ENCODE measurements at regions of chr12 and their contacts with region 1.

Region 1: GRCh38 chr12:64551698-64552097 is 58.6 kb upstream of the RASSF3 start:
- DNase-seq: no peak
- H3K4me3 ChIP-seq: no peak overlapping the region
- H3K27ac ChIP-seq: no peak overlapping the region
- H3K4me1 ChIP-seq: no peaks in the 10 kb centered on the region
- H3K27me3 ChIP-seq: no peaks in the 10 kb centered on the region
- CTCF ChIP-seq: no peak
- EP300 ChIP-seq: no peak
- RAD21 ChIP-seq: no peak

Region 2: DNA sequence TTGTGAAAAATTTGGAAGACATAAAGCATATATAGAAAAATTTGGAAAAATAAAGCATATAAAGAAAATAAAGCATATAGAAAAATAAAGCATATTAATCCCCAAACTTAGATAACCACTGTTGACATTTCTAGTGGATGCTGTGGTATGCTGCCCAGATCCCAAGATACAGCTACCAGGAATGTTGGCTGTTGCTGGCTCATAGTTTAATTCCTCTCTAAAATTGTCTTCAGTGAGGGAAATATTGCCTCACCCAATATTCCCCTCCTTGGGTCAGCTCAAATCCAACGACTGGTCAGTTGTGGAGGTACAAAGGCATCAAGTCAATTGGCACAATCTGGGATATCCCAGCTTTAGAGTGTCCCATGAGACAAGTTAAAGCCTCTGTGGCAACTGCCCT is 319.5 kb before region 1 on chr12:
- CTCF ChIA-PET with region 1: no interaction called
- POLR2A ChIA-PET with region 1: no interaction called
- DNase-seq: no peak
- H3K4me3 ChIP-seq: no peak overlapping the region
- H3K27ac ChIP-seq: no peak overlapping the region
- H3K4me1 ChIP-seq: peaks cover 0 to 2% of the 10 kb centered on the region in 2 experiments; a peak in 1 of 4 replicates
- H3K27me3 ChIP-seq: no peaks in the 10 kb centered on the region
- CTCF ChIP-seq: no peak
- EP300 ChIP-seq: no peak
- RAD21 ChIP-seq: no peak

Region 3: GRCh38 chr12:64566732-64567399 is 15.2 kb after region 1 on chr12:
- CTCF ChIA-PET with region 1: interaction called, 37 read pairs
- POLR2A ChIA-PET with region 1: no interaction called
- DNase-seq: no peak
- H3K4me3 ChIP-seq: no peak overlapping the region
- H3K27ac ChIP-seq: no peak overlapping the region; a peak in 1 of 4 replicates
- H3K4me1 ChIP-seq: peaks cover 0 to 3% of the 10 kb centered on the region in 2 experiments; a peak in 1 of 4 replicates
- H3K27me3 ChIP-seq: no peaks in the 10 kb centered on the region
- CTCF ChIP-seq: no peak
- EP300 ChIP-seq: no peak
- RAD21 ChIP-seq: no peak

Region 4: DNA sequence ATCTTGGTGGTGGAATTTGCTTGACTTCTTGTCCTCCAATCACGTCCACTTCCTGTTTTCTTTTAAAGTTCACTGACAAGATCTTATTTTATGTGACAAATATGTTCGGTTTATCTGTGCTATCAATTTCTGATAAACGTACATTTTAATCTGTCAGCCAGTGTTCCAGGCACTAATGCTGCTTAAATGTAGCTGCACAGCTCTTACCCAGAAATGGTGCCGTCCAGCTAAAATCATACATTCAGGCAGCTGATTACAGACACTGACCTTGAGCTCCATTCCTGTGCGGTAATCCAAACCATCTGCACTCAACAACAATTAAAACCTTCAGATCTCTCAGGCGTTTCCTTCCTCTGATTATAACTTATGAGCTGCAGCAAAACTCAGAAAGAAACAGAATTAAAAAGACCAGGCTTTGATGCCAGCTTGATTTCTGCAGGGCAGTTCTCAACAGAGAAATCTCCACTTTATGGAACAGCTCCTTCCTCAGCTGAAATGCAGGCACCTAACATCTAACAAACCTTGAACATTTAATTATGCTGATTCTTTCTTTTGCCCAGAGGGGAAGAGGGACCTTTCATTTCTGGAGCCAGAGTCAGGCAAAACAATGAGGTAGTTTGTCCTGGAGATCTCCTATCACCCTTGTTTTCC is 32.2 kb after region 1 on chr12:
- CTCF ChIA-PET with region 1: interaction called, 11 read pairs
- POLR2A ChIA-PET with region 1: no interaction called
- DNase-seq: peak; percentile 59
- H3K4me3 ChIP-seq: no peak overlapping the region
- H3K27ac ChIP-seq: peak overlapping the region in 1 of 2 experiments; percentile 82; a peak in 2 of 4 replicates
- H3K4me1 ChIP-seq: peaks cover 11 to 13% of the 10 kb centered on the region in 2 experiments; a peak in 3 of 4 replicates
- H3K27me3 ChIP-seq: no peaks in the 10 kb centered on the region
- CTCF ChIP-seq: no peak
- EP300 ChIP-seq: peak in 1 of 2 experiments; percentile 75; a peak in 2 of 4 replicates
- RAD21 ChIP-seq: peak; percentile 11; the same call in 1 of the 2 replicates

Region 5: DNA sequence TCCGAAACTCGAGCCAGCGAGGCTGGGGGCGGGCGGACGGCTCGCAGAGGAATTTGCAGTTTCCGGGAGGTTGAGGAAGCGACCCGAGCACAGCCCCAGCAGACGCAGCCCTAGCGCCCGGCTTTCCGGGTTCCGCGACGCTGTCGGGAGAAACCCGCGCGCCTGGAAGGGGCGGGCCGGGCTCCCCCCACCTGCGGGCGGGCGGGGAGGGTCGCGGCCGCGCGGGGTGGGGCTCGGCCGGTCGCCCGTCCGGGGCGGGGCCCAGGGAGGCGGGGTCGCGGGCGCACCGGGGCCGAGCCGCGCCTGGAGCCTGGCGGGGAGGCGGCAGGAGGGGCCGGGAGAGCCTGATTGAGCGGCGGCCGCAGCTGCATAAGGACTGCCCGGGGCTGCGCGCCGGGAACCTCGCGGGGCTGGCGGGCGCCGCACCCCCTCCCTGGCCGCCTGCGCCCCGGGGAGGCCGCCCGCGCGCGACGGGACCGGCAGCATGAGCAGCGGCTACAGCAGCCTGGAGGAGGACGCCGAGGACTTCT is 58.5 kb after region 1 on chr12 and contains the start of gene RASSF3:
- CTCF ChIA-PET with region 1: interaction called, 39 read pairs
- POLR2A ChIA-PET with region 1: no interaction called
- DNase-seq: peak; percentile 94
- H3K4me3 ChIP-seq: peak within 1 kb of the TSS; percentile 74 to 91
- H3K27ac ChIP-seq: peak within 1 kb of the TSS; percentile 73 to 87
- H3K4me1 ChIP-seq: peaks cover 7 to 10% of the 10 kb centered on the region in 2 experiments; a peak in 3 of 4 replicates
- H3K27me3 ChIP-seq: no peaks in the 10 kb centered on the region
- CTCF ChIP-seq: no peak
- EP300 ChIP-seq: no peak
- RAD21 ChIP-seq: no peak; the same call in 1 of the 2 replicates
- polyA plus RNA-seq, gene RASSF3: 11.1 and 15.0 TPM in 2 replicates

Region 6: GRCh38 chr12:64682572-64683277 is 131.0 kb after region 1 on chr12:
- CTCF ChIA-PET with region 1: interaction called, 14 read pairs
- POLR2A ChIA-PET with region 1: no interaction called
- DNase-seq: peak; percentile 80
- H3K4me3 ChIP-seq: no peak overlapping the region
- H3K27ac ChIP-seq: peak overlapping the region in 1 of 2 experiments; percentile 91; a peak in 2 of 4 replicates
- H3K4me1 ChIP-seq: peaks cover 21 to 25% of the 10 kb centered on the region in 2 experiments
- H3K27me3 ChIP-seq: no peaks in the 10 kb centered on the region
- CTCF ChIP-seq: no peak
- EP300 ChIP-seq: peak in 1 of 2 experiments; percentile 77; a peak in 2 of 4 replicates
- RAD21 ChIP-seq: peak; percentile 18; the same call in 1 of the 2 replicates

Region 7: GRCh38 chr12:64696080-64696741 is 144.5 kb after region 1 on chr12:
- CTCF ChIA-PET with region 1: interaction called, 182 read pairs
- POLR2A ChIA-PET with region 1: no interaction called
- DNase-seq: peak; percentile 27
- H3K4me3 ChIP-seq: no peak overlapping the region
- H3K27ac ChIP-seq: no peak overlapping the region
- H3K4me1 ChIP-seq: peaks cover 2 to 12% of the 10 kb centered on the region in 2 experiments; a peak in 2 of 4 replicates
- H3K27me3 ChIP-seq: no peaks in the 10 kb centered on the region
- CTCF ChIP-seq: peak; percentile 59
- EP300 ChIP-seq: no peak
- RAD21 ChIP-seq: peak; percentile 68

Region 8: DNA sequence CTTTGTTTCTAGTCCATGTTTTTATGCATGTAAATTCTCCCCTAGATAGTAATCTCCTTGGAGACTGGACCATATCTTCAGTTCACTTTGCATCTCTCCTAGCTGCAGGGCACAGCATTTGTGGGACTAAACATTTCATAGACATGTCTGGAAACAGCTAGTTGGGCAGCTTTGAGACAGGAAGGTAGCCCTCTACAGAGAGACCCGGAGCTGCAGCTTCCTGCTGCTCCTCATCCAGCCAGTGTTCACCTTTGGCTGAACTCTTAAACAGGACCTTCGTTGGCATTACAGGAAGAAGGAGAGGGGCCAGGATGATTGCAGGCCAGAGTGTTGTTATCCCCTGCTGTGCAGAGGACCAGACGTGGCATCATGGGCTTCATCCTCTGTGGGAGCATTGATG is 154.6 kb after region 1 on chr12:
- CTCF ChIA-PET with region 1: interaction called, 27 read pairs
- POLR2A ChIA-PET with region 1: no interaction called
- DNase-seq: peak; percentile 27
- H3K4me3 ChIP-seq: no peak overlapping the region
- H3K27ac ChIP-seq: peak overlapping the region in 1 of 2 experiments; percentile 80; a peak in 2 of 4 replicates
- H3K4me1 ChIP-seq: peaks cover 7 to 20% of the 10 kb centered on the region in 2 experiments; a peak in 1 of 4 replicates
- H3K27me3 ChIP-seq: no peaks in the 10 kb centered on the region
- CTCF ChIP-seq: no peak
- EP300 ChIP-seq: no peak
- RAD21 ChIP-seq: no peak

Measured in SK-N-SH (cell line).